Activated CD4-positive, alpha-beta T cell treated with anti-CD3 and anti-CD28 coated beads for 36 hours (primary cell): ENCODE measurements at regions of chr6 and their contacts with region 1.

Region 1: DNA sequence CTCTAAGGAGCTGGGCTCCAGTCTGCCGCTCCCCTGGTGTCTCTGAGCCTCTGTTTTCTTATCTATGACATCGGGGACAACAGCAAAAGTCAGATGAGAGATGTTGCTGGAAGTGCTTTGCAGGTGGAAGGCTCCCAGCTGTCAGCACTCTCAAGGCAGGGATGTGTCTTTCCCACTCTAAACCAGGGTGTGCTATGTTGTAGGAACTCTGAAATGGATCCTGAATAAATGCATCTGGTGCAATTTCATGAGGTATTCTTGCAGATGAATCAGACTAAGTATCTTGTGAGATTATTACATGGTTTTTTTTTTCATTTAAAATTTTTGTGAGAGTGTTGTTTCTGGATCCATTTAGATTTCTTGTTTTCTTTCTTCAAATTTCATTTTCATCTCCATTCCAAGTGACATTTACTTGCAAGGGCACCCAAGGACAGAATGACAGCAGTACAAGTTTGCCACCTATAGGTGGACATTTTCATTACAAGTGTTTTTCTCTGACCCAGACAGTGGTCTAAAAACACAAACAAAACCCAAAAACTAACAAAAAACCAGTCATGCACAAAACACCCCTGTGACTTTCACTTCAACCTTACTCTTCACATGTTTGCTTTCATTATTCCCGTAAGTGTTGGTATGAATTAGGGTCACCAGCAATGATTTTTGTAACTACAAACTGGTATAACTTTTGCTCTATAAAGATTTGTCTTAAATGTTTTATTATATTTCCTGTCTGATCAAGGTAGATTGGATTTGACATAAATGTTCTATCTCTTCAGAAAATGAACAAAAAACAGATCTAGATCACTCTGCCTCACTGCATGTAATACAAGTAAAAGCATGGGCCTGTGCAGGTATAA is 14.7 kb upstream of the SIM1 start:
- DNase-seq: no peak
- ATAC-seq: peak; percentile 53
- H3K4me3 Mint-ChIP-seq: no peak overlapping the region
- H3K27ac Mint-ChIP-seq: no peak overlapping the region
- H3K4me1 Mint-ChIP-seq: no peaks in the 10 kb centered on the region
- H3K27me3 Mint-ChIP-seq: peaks cover 23% of the 10 kb centered on the region

Region 2: GRCh38 chr6:99868074-99868702 is 611.2 kb before region 1 on chr6:
- CTCF ChIA-PET with region 1: no interaction called
- POLR2A ChIA-PET with region 1: no interaction called
- intact Hi-C with region 1: loop called (anchors 1 kb)
- DNase-seq: peak; percentile 87
- ATAC-seq: peak; percentile 65
- H3K4me3 Mint-ChIP-seq: no peak overlapping the region
- H3K27ac Mint-ChIP-seq: no peak overlapping the region
- H3K4me1 Mint-ChIP-seq: peaks cover 4% of the 10 kb centered on the region
- H3K27me3 Mint-ChIP-seq: peaks cover 23% of the 10 kb centered on the region

Region 3: GRCh38 chr6:100105919-100106529 is 373.4 kb before region 1 on chr6:
- CTCF ChIA-PET with region 1: no interaction called
- POLR2A ChIA-PET with region 1: no interaction called
- intact Hi-C with region 1: loop called in 1 of 2 experiments (anchors 2 kb)
- DNase-seq: no peak
- ATAC-seq: no peak
- H3K4me3 Mint-ChIP-seq: no peak overlapping the region
- H3K27ac Mint-ChIP-seq: no peak overlapping the region
- H3K4me1 Mint-ChIP-seq: no peaks in the 10 kb centered on the region
- H3K27me3 Mint-ChIP-seq: peaks cover 14% of the 10 kb centered on the region

Region 4: DNA sequence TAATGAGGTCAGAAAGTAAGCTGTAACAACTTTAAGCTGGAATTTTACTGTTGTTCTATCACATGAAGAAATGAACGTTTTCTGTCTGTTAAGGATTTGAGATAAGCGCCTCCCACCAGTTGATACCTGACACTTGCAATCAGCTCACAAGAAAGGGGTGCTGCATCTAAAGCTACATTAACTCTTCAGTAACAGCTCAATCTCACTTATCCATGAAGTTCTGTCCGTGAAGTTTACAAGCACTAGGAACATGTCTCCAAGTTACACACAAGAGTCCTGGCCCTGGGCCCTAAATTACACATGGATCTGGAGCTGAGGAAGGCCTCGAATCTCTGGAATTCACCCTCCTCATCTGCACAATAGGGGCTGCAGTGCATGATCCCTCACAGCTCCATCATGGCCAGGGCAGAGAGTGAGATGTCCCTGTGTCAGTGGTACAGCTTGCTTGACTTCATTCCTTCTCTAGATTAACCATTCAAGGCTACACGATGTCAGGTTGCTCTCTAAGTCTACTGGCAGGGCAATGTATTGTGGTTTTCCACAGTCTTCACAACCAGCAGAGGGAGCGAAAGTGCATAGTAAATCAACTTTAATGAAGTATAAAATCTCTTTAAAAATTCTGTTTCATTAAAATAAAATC is 303.0 kb before region 1 on chr6:
- CTCF ChIA-PET with region 1: no interaction called
- POLR2A ChIA-PET with region 1: no interaction called
- intact Hi-C with region 1: loop called in 1 of 2 experiments (anchors 5 kb)
- DNase-seq: no peak
- ATAC-seq: no peak
- H3K4me3 Mint-ChIP-seq: no peak overlapping the region
- H3K27ac Mint-ChIP-seq: no peak overlapping the region
- H3K4me1 Mint-ChIP-seq: no peaks in the 10 kb centered on the region
- H3K27me3 Mint-ChIP-seq: peaks cover 6% of the 10 kb centered on the region

Region 5: GRCh38 chr6:100370265-100370664 is 109.1 kb before region 1 on chr6:
- CTCF ChIA-PET with region 1: no interaction called
- POLR2A ChIA-PET with region 1: no interaction called
- intact Hi-C with region 1: loop called in 1 of 2 experiments (anchors 1 kb)
- DNase-seq: no peak
- ATAC-seq: no peak
- H3K4me3 Mint-ChIP-seq: no peak overlapping the region
- H3K27ac Mint-ChIP-seq: no peak overlapping the region
- H3K4me1 Mint-ChIP-seq: no peaks in the 10 kb centered on the region
- H3K27me3 Mint-ChIP-seq: peaks cover 6% of the 10 kb centered on the region